Sigmoid colon (tissue), 7 donors: ENCODE measurements at regions of chr17 and their contacts with region 1.

Region 1: DNA sequence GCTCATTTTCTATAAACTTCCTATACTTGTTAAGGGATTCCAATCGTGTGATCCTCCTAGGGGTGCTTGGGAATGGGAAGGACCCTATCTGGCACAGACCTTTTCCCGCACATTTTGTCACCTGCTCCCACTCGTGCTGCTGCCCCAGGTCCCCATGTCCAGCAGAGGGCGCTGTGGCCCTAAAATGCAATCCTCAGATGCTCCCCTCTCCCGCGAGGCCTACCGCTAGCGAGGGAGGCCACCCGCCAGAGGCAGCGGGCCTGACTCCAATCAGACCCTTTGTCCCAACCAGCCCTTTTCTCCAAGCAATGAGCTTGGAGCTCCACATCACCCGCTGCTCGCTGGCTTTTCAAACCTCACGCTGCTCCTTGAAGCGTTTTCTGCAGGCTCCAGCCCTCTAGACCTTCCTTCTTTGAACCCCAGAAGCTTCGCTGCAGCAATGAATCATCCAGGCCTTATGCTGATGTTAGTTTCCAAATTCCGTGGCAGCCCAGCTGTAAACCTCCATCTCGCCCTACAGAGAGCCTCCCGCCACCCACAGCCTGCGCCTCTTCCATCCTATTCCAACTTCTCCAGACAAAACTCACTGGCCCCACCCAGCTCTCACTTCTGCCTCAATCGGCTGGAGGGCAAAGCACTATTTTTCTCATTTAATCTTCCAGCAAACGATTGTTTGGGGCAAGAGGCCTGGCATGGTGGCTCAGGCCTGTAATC is 23.6 kb upstream of the FZD2 start:
- DNase-seq: peak; percentile 93
- H3K4me3 ChIP-seq: peak overlapping the region in 2 of 4 donors; percentile 20 to 29
- H3K27ac ChIP-seq: peak overlapping the region; percentile 34 to 77 (median 52)
- H3K4me1 ChIP-seq: peaks cover 0 to 8% (median 6%) of the 10 kb centered on the region in 4 donors
- H3K27me3 ChIP-seq: no peaks in the 10 kb centered on the region
- CTCF ChIP-seq: peak; percentile 89 to 98 (median 94)
- EP300 ChIP-seq: no peak
- POLR2A ChIP-seq: no peak

Region 2: GRCh38 chr17:44623070-44623725 is 89.5 kb after region 1 on chr17:
- intact Hi-C with region 1: no loop called
- DNase-seq: peak; percentile 5
- H3K4me3 ChIP-seq: no peak overlapping the region
- H3K27ac ChIP-seq: no peak overlapping the region
- H3K4me1 ChIP-seq: no peaks in the 10 kb centered on the region
- H3K27me3 ChIP-seq: peaks cover 0 to 2% (median 0%) of the 10 kb centered on the region in 3 donors
- CTCF ChIP-seq: no peak
- EP300 ChIP-seq: no peak
- POLR2A ChIP-seq: no peak

Region 3: DNA sequence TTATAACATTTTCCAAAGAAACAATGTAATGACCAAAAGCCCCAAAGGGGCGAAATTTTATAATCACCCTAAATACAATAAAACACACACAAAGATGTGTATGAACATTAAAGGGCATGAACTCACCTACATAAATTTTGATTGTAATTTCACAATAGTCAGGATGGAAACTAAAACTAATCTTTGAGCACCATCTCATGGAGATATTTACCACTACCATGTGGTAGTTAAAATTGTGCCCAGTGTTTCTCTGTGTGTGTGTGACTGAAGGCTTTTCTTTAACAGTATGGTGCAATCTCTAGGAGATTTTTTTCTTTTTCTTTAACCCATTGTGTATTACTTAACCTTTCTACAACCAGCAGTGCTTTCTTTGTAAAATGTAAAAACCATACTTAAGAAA is 102.9 kb after region 1 on chr17:
- intact Hi-C with region 1: loop called (anchors 1 kb)
- DNase-seq: no peak
- H3K4me3 ChIP-seq: no peak overlapping the region
- H3K27ac ChIP-seq: no peak overlapping the region
- H3K4me1 ChIP-seq: no peaks in the 10 kb centered on the region
- H3K27me3 ChIP-seq: no peaks in the 10 kb centered on the region
- CTCF ChIP-seq: peak in 3 of 4 experiments; percentile 27 to 49 (median 46)
- EP300 ChIP-seq: no peak
- POLR2A ChIP-seq: no peak

Region 4: DNA sequence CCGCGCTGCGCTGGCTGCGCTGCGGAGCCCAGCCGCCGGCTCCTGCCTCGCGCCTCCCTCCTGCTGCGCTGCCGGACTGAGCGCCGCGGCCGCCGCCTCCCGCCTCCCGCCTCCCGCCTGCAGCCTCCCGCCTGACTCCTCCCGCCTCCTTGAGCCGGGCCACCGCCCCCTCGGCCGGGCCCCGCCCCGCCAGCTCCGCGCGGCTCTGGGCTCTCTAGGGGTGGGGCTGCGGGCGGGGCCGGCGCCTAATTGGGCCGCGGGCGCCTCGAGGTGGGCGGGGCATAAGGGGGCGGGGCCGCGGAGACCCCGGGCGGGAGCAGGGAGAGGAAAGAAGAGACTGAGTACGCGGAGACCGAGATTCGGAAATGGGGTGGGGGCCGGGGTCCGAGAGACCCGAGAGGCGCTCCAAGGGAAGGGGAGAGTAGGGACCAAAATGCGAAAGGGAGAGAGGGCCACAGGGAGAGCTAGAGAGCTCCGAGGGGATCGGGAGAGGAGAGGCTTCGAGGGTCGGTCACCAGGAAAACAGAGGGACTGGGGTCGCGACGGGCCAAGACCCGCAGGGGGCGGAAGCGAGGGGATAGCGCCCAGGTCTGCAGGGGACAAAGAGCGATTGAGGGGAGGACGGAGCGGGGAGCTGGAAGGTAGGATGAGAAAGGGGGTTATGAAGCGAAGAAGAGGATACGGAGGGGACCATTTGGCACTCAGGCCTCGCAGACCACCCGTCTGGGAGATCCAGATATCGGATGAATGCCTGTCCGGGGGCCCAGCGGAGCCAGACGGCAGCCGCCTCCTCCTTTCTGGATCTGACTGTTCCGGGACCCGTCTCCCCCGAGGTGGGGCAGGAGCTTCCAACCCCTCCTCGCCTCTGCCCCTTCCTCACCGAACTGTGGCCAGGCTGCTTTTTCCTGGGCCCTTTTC is 434.8 kb after region 1 on chr17 and contains the start of gene C1QL1:
- intact Hi-C with region 1: no loop called
- DNase-seq: peak; percentile 96
- H3K4me3 ChIP-seq: peak within 1 kb of the TSS; percentile 42 to 50 (median 48)
- H3K27ac ChIP-seq: peak within 1 kb of the TSS; percentile 20 to 83 (median 67)
- H3K4me1 ChIP-seq: peaks cover 0 to 40% (median 33%) of the 10 kb centered on the region in 4 donors
- H3K27me3 ChIP-seq: peaks cover 19 to 33% (median 29%) of the 10 kb centered on the region in 3 donors
- CTCF ChIP-seq: peak in 1 of 4 experiments; percentile 11
- EP300 ChIP-seq: no peak
- POLR2A ChIP-seq: peak in 1 of 2 donors; percentile 39
- total RNA-seq, gene C1QL1: 0.41 to 4.3 (median 1.3) TPM